Activated T-helper 2 cell treated with anti-CD3 and anti-CD28 coated beads, Interferon-gamma antibody, Interleukin-2, Interleukin-4, amounts not matched to agents 10 μg/mL and 5 μg/mL and 100 μg/mL, durations not matched to agents 14 hours and 24 hours and 36 hours (primary cell): ENCODE measurements at regions of chr20 and their contacts with region 1.

Region 1: GRCh38 chr20:18793625-18794427 is 19.8 kb upstream of the SCP2D1 start:
- DNase-seq: peak; percentile 78
- H3K4me3 Mint-ChIP-seq: peak overlapping the region; percentile 86
- H3K27ac Mint-ChIP-seq: peak overlapping the region; percentile 83
- H3K4me1 Mint-ChIP-seq: peaks cover 10% of the 10 kb centered on the region
- H3K27me3 Mint-ChIP-seq: peaks cover 11% of the 10 kb centered on the region

Region 2: DNA sequence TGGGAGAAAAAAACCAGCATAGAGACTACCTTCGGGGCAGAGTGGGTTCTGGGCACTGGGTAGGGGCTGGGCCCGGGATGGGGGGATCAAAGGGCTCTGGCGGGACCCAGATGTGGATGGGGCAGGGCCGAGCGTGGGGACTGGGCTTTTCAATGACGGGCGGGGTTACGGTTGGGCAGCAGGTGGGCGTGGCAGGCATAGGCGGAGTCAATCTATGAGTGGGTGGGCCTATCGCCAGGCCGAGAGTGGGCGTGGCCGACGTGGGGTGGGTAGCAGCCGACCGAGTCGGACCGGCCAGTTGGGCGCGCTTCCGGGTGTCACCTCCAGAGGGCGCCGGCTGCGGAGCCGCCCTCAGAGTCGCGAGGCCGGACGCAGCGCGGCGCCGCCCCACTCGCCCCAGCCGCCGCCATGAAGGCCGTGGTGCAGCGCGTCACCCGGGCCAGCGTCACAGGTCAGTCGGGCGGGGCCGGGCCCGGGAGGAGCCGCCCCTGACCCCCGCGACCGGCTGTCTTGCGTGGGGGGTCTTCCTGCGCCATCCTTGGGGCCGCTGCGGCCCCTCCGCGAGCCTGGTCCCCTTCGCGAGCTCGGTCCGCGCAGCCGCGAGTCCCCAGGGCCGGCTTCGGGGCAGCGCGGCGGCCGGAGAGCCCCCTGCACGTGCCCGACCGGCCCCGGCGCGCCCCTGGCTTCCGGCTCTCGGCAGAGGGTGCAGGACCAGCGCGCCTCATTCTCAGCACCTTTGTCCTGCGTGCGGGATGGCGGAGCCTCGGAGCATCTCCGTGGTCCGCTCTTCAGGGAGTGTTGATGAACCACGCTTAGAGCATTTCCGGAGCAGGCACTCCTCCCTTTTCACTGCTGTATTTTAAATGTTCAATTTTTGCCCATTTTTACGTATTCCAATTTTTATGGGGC is 205.9 kb before region 1 on chr20 and contains the start of gene DTD1:
- intact Hi-C with region 1: loop called (anchors 5 kb)
- DNase-seq: peak; percentile 83
- H3K4me3 Mint-ChIP-seq: peak within 1 kb of the TSS; percentile 87
- H3K27ac Mint-ChIP-seq: peak within 1 kb of the TSS; percentile 74
- H3K4me1 Mint-ChIP-seq: peaks cover 20% of the 10 kb centered on the region
- H3K27me3 Mint-ChIP-seq: peaks cover 9% of the 10 kb centered on the region
- total RNA-seq, gene DTD1: 49.9 and 50.3 TPM in 2 replicates

Region 3: DNA sequence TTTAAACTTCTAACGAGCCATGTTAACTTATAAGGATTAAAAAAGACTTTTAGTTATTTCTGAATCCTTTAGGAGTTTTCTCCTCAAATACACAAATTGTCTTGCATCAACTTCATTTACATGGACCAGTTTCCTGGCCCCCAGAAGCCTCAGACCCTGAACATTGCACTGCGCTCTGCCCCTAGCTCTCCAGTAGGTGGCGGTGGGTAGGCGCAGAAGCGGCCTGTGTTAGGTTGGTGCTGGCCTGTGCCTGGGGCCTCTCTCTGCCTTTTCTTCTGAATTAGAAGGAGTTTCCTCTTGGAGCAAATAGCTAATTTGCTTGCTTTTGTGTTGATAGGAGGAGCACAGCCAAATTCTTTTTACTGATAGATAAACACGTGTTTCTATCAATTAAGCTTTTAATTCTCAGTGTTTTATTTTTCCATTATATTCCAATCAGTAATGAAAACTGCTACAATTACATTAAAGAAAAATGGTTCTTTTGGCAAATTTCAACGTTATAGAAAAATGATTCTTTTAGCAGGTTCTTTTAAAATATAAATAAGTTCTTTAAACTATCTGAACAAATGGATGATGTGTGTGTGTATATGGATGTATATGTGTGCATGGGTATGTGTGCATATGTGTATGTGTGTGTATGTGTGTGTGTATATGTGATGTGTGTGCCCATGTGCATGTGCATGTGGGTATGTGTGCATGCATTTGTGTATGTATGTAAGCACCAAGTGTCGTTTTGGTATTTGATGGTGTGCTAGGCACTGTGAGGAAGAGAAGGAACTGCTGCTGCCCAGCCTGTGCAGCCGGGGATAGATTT is 161.4 kb before region 1 on chr20:
- intact Hi-C with region 1: no loop called
- DNase-seq: peak; percentile 15
- H3K4me3 Mint-ChIP-seq: no peak overlapping the region
- H3K27ac Mint-ChIP-seq: no peak overlapping the region
- H3K4me1 Mint-ChIP-seq: peaks cover 2% of the 10 kb centered on the region
- H3K27me3 Mint-ChIP-seq: no peaks in the 10 kb centered on the region

Region 4: DNA sequence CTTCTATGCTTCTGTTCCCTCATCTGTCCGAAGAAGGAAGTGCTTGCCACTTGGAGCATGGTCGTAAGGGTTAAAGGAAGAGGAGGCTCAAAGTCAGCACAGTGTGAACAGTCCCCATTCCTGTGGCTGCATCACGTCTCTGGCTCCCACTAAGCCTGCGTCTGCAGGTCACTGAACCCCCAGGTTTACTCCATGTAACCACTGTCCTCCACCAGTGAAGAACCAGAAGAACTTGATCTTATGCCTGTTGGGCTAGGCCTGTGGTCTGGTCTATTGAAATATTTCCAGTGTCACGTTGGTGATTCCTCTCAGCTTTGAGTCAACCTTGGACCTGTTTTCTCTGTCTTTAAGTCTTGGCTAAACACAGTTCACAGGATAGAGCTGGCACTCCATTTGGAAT is 26.1 kb before region 1 on chr20:
- intact Hi-C with region 1: no loop called
- DNase-seq: no peak
- H3K4me3 Mint-ChIP-seq: no peak overlapping the region
- H3K27ac Mint-ChIP-seq: no peak overlapping the region
- H3K4me1 Mint-ChIP-seq: no peaks in the 10 kb centered on the region
- H3K27me3 Mint-ChIP-seq: peaks cover 5% of the 10 kb centered on the region

Region 5: GRCh38 chr20:18822832-18823231 is 29.0 kb after region 1 on chr20:
- intact Hi-C with region 1: no loop called
- DNase-seq: no peak
- H3K4me3 Mint-ChIP-seq: no peak overlapping the region
- H3K27ac Mint-ChIP-seq: no peak overlapping the region
- H3K4me1 Mint-ChIP-seq: no peaks in the 10 kb centered on the region
- H3K27me3 Mint-ChIP-seq: no peaks in the 10 kb centered on the region

Region 6: GRCh38 chr20:18839507-18840247 is 45.9 kb after region 1 on chr20:
- intact Hi-C with region 1: no loop called
- DNase-seq: no peak
- H3K4me3 Mint-ChIP-seq: no peak overlapping the region
- H3K27ac Mint-ChIP-seq: no peak overlapping the region
- H3K4me1 Mint-ChIP-seq: no peaks in the 10 kb centered on the region
- H3K27me3 Mint-ChIP-seq: peaks cover 1% of the 10 kb centered on the region

Region 7: GRCh38 chr20:20052074-20052970 is 1258.5 kb after region 1 on chr20 and contains the starts of genes CFAP61 and CRNKL1:
- intact Hi-C with region 1: loop called (anchors 10 kb)
- DNase-seq: peak; percentile 96
- H3K4me3 Mint-ChIP-seq: peak within 1 kb of the TSS; percentile 96
- H3K27ac Mint-ChIP-seq: peak within 1 kb of the TSS; percentile 90
- H3K4me1 Mint-ChIP-seq: peaks cover 9% of the 10 kb centered on the region
- H3K27me3 Mint-ChIP-seq: peaks cover 4% of the 10 kb centered on the region
- total RNA-seq, gene CFAP61: 0.32 TPM in 1 of 2 replicates, not detected in the other
- total RNA-seq, gene CRNKL1: 19.3 and 20.1 TPM in 2 replicates